AG04449 (cell line): ENCODE measurements at regions of chr7 and their contacts with region 1.

Region 1: GRCh38 chr7:30974605-30975255 is 11.0 kb downstream of the GHRHR start:
- DNase-seq: no peak
- H3K4me3 ChIP-seq: no peak overlapping the region
- CTCF ChIP-seq: peak; percentile 53

Region 2: GRCh38 chr7:30800785-30801252 is 173.9 kb before region 1 on chr7:
- CTCF ChIA-PET with region 1: interaction called, 19 read pairs
- POLR2A ChIA-PET with region 1: no interaction called
- DNase-seq: no peak
- H3K4me3 ChIP-seq: no peak overlapping the region
- CTCF ChIP-seq: peak; percentile 65

Region 3: DNA sequence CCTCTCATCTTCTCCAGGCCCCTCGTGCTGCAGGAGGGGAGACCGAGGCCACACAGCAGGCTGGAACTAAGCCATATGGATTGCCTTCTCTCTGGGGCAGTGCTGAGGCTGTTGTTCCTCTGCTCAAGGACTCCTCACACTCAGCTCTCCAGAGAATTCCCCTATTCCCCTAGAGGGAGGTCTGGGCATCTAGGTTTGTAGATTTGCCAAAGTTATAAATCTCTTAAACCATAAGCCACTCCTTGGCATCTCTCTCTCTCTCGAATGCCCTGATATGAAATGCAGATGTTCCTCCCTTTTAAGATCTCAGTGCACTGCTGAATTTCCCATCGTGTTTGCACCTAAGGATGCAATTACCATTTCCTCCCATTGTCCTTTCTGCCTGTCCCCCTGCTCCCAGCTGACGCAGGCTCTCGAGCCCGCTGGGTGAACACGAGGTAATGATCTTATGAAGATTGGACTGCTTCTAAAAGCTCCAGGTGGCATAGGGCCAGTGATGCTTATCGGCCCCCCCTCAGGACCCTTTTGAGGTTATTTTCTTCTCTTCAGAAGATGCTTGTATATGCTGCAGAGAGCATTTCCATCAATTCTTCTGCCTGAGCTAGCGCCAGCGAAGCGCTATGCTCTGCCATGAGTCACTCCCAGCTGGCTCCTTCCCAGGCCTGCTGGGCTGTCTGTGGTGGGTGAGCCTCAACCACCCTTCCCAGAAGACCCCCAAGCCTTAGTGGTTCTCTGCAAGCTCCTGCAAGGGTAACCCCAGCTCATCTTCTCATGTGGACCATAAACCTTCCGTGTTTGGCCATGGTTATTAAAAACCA is 104.7 kb before region 1 on chr7:
- CTCF ChIA-PET with region 1: no interaction called
- POLR2A ChIA-PET with region 1: no interaction called
- DNase-seq: no peak
- H3K4me3 ChIP-seq: no peak overlapping the region
- CTCF ChIP-seq: no peak